Activated CD4-positive, alpha-beta memory T cell treated with anti-CD3 and anti-CD28 coated beads for 36 hours (primary cell): ENCODE measurements at regions of chr7 and their contacts with region 1.

Region 1: DNA sequence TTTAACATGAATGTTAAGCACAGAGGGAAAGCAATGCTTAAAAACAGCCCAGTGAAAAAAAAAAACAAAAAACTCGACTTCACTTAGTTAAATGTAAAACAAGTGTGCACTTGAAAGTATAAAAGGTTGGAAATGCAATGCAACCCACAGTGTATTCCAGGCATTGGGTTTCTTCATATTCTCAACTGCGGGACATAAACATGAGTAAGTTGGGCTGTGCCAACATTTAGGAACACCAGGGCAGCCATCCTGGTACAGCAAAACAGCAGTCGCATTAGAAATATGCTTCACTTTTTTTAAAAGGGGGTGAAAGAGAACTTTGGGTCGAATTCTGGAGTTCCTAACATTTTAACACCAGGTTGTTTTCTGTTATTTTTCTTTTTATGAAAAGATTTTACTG is 937 bp downstream of the STEAP1 start:
- DNase-seq: no peak
- H3K4me3 Mint-ChIP-seq: no peak overlapping the region
- H3K27ac Mint-ChIP-seq: no peak overlapping the region
- H3K4me1 Mint-ChIP-seq: peaks cover 3% of the 10 kb centered on the region
- H3K27me3 Mint-ChIP-seq: peaks cover 27% of the 10 kb centered on the region

Region 2: DNA sequence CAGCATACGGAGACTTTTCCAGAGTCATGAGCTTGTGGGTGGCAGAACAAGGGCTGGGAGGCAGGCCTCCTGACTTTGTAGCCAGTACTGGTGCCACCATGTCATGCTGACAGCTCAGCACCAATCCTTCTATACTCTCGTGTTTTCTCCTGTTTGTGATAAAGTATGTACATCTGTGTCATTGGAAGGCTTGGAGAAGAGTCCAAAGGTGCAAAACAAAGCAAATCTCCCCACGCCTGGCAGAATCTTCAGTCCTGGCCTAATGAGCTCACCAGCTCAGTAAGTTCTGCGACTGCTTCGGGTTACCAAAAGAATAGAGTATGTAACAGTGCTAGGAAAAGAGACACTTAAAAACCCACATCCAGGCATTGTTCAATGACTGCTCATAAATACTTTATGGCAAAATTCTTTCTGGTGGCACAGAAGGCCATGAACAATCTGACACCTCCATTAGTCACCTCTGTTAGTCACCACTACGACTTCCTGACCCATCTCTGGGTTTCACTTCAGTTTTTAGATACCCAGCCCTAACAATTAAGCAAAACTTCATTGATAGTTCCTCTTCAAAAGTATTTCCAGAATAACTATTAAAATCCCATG is 23.6 kb after region 1 on chr7:
- CTCF ChIA-PET with region 1: no interaction called
- POLR2A ChIA-PET with region 1: no interaction called
- intact Hi-C with region 1: loop called (anchors 2 kb)
- DNase-seq: peak; percentile 27
- H3K4me3 Mint-ChIP-seq: no peak overlapping the region
- H3K27ac Mint-ChIP-seq: peak overlapping the region; percentile 68
- H3K4me1 Mint-ChIP-seq: peaks cover 17% of the 10 kb centered on the region
- H3K27me3 Mint-ChIP-seq: peaks cover 2% of the 10 kb centered on the region

Region 3: DNA sequence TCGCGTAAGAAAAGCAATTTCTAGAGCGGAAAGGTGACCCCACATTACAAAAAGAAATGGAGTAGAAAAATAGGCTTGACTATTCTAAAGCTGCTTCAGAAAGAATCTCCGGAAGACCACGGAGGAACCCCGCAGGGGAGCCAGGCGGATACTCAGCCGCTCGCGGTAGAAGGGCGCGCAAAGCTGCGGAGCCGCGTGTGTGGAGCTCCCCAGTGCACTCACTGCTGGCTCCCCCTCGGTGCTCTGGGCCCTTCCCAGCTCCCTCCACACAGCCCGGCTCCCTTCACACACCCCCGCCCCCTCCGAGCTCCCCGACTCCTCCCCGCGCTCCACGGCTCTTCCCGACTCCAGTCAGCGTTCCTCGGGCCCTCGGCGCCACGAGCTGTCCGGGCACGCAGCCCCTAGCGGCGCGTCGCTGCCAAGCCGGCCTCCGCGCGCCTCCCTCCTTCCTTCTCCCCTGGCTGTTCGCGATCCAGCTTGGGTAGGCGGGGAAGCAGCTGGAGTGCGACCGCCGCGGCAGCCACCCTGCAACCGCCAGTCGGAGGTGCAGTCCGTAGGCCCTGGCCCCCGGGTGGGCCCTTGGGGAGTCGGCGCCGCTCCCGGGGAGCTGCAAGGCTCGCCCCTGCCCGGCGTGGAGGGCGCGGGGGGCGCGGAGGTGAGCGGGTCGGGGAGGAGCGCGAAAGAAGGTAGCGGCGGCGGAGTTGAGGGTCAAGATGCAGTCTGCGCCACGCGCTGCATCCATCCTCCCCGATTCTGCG is 56.4 kb after region 1 on chr7 and contains the start of gene STEAP2:
- CTCF ChIA-PET with region 1: interaction called, 6 read pairs
- POLR2A ChIA-PET with region 1: no interaction called
- intact Hi-C with region 1: loop called (anchors 5 kb)
- DNase-seq: peak; percentile 41
- H3K4me3 Mint-ChIP-seq: peak within 1 kb of the TSS; percentile 26
- H3K27ac Mint-ChIP-seq: no peak within 1 kb of the TSS
- H3K4me1 Mint-ChIP-seq: peaks cover 6% of the 10 kb centered on the region
- H3K27me3 Mint-ChIP-seq: peaks cover 21% of the 10 kb centered on the region
- total RNA-seq, gene STEAP2: not detected

Region 4: GRCh38 chr7:90244909-90245851 is 90.0 kb after region 1 on chr7 and contains the start of gene CFAP69:
- CTCF ChIA-PET with region 1: interaction called, 14 read pairs
- POLR2A ChIA-PET with region 1: no interaction called
- intact Hi-C with region 1: loop called (anchors 5 kb)
- DNase-seq: peak; percentile 90
- H3K4me3 Mint-ChIP-seq: peak within 1 kb of the TSS; percentile 83
- H3K27ac Mint-ChIP-seq: peak within 1 kb of the TSS; percentile 13
- H3K4me1 Mint-ChIP-seq: peaks cover 18% of the 10 kb centered on the region
- H3K27me3 Mint-ChIP-seq: peaks cover 23% of the 10 kb centered on the region
- total RNA-seq, gene CFAP69: 0.48 TPM in 1 of 2 experiments, not detected in the other

Region 5: DNA sequence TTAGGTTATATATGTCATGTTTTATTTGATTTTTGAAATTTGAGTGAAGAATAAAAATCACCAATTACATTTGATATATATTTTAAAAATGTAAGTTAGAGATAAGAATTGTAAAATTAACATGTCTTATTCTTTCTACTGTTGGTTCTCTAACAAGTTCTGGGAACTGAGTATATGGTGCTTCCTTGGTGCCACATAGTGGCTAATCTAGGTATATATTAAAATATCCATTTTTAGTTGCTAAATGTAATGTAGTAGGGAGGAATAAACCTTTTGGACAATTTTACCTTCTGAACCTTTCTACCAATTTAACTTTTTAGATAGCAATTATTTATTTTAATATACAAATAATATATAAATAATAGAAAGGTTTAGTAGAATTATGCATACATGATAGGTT is 107.2 kb after region 1 on chr7:
- CTCF ChIA-PET with region 1: interaction called, 7 read pairs
- POLR2A ChIA-PET with region 1: no interaction called
- intact Hi-C with region 1: loop called (anchors 1 kb)
- DNase-seq: no peak
- H3K4me3 Mint-ChIP-seq: no peak overlapping the region
- H3K27ac Mint-ChIP-seq: no peak overlapping the region
- H3K4me1 Mint-ChIP-seq: no peaks in the 10 kb centered on the region
- H3K27me3 Mint-ChIP-seq: peaks cover 5% of the 10 kb centered on the region

Region 6: DNA sequence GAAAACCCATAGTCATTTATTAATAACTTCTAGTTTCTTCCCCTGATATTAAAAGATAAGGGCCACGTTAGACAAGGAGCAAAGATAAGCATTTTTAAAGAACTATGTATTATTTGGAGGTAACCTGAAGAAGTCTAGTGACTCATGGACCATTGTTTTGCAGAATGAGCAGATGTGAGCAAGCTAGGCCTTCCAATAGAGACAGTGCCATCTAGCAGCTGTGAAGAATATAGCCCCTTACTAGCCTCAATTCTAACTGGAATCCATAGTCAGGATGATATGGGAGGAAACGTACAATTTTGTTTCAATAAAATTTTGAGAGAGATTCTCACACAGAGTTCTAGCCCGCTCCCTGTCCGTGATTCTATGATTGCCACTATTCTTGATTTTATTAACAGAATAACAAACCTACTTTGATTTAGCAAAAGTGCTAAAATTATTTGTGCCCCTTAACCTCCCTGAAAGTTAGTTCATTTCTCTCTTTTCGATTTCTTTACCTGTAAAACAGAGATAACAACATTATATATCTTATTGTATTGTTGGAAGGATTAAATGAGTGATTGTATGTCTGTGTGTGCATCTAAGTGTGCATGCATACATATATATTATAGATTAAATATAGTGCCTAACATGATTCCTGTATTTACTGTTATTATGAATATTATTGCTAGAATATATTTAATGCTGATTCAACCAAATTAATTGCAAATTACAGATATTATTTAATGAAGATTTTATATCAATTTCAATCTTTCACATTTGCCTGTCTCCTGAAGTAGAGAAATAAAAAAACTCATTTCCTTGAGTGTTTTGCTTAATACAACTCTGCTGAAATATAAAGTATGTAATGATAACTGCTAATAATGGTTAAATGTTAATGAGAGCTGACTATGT is 143.2 kb after region 1 on chr7:
- CTCF ChIA-PET with region 1: interaction called, 3 read pairs
- POLR2A ChIA-PET with region 1: no interaction called
- intact Hi-C with region 1: loop called (anchors 1 kb)
- DNase-seq: no peak
- H3K4me3 Mint-ChIP-seq: no peak overlapping the region
- H3K27ac Mint-ChIP-seq: no peak overlapping the region
- H3K4me1 Mint-ChIP-seq: no peaks in the 10 kb centered on the region
- H3K27me3 Mint-ChIP-seq: peaks cover under 1% of the 10 kb centered on the region

Region 7: DNA sequence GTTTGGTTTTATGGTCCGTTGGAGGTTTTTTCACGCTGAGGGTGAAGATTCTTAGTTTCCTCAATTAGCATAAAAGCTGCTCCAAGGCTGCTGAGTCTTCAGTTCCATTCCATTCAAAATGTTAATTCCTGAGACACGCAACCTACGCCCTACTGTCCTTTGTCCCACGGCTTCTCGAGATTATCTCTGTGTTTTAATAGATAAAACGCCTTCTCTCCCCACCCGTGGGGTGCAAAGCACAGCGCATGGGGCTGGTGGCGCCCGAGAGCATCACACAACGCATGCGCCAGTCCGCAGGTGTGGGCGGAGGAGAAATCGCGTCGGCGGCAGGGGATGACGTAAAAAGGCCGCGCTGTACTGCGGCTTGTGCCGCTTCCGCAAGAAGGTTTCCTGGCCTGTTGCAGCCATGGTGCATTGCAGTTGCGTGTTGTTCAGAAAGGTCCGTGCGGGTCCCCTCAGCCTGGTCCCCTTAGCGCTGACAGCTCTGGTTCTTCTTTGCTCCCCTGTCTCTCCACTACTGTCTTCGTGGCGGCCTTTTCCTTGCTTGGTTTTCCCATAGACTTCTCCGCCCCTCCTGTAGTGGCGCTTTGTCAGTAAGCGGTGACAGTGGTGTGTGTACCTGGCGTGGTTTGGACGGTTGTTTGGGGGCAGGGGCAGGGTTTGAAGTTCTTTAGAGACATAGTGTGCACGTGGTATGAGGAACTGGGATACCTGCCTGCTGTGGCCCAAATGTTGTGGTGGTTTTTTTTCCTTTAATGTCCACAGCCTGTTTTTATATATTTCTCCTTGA is 191.3 kb after region 1 on chr7 and contains the start of gene GTPBP10:
- CTCF ChIA-PET with region 1: interaction called, 7 read pairs
- POLR2A ChIA-PET with region 1: no interaction called
- intact Hi-C with region 1: loop called (anchors 5 kb)
- DNase-seq: peak; percentile 97
- H3K4me3 Mint-ChIP-seq: peak within 1 kb of the TSS; percentile 94
- H3K27ac Mint-ChIP-seq: peak within 1 kb of the TSS; percentile 93
- H3K4me1 Mint-ChIP-seq: peaks cover 40% of the 10 kb centered on the region
- H3K27me3 Mint-ChIP-seq: no peaks in the 10 kb centered on the region
- total RNA-seq, gene GTPBP10: 32.9 to 33.2 TPM